ENCODE measurements at regions of chr2 and their contacts with region 1.

Region 1: GRCh38 chr2:32277674-32278482 is at the start of gene YIPF4:
- DNase-seq: peak; percentile 96
- ATAC-seq: peak; percentile 98
- H3K4me3 ChIP-seq: peak within 1 kb of the TSS; percentile 70 to 98 (median 94)
- H3K4me3 Mint-ChIP-seq: peak within 1 kb of the TSS; percentile 91
- H3K27ac ChIP-seq: peak within 1 kb of the TSS; percentile 66 to 95
- H3K27ac Mint-ChIP-seq: peak within 1 kb of the TSS; percentile 97
- H3K4me1 ChIP-seq: peaks cover 12 to 20% of the 10 kb centered on the region in 2 donors
- H3K4me1 Mint-ChIP-seq: peaks cover 23% of the 10 kb centered on the region
- H3K27me3 ChIP-seq: no peaks in the 10 kb centered on the region
- H3K27me3 Mint-ChIP-seq: peaks cover 12% of the 10 kb centered on the region
- CTCF ChIP-seq: no peak
- total RNA-seq, gene YIPF4: 38.0 and 42.4 TPM in 2 replicates

Region 2: DNA sequence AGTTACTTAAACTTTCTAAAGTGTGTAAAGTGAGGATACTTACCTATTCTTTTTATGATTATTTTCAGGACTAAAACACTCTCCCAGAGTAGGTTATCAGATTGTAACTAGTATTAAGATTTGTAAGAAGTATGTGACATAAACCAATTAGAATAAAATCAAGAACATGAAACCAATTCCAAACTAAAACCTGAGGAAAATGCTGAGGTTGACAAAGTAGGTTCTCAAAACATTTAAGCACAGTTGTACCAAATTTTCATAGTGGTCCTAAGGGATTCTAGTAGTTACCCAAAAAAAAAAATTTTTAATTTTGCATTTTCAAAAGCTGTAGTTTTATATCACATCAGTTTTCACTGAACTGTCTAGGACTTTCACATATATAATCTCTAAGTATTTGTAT is 424.4 kb before region 1 on chr2:
- CTCF ChIA-PET with region 1: no interaction called
- POLR2A ChIA-PET with region 1: no interaction called
- intact Hi-C with region 1: no loop called
- DNase-seq: no peak
- ATAC-seq: no peak
- H3K4me3 ChIP-seq: no peak overlapping the region
- H3K4me3 Mint-ChIP-seq: no peak overlapping the region
- H3K27ac ChIP-seq: no peak overlapping the region
- H3K27ac Mint-ChIP-seq: no peak overlapping the region
- H3K4me1 ChIP-seq: no peaks in the 10 kb centered on the region
- H3K4me1 Mint-ChIP-seq: no peaks in the 10 kb centered on the region
- H3K27me3 ChIP-seq: no peaks in the 10 kb centered on the region
- H3K27me3 Mint-ChIP-seq: no peaks in the 10 kb centered on the region
- CTCF ChIP-seq: no peak

Region 3: DNA sequence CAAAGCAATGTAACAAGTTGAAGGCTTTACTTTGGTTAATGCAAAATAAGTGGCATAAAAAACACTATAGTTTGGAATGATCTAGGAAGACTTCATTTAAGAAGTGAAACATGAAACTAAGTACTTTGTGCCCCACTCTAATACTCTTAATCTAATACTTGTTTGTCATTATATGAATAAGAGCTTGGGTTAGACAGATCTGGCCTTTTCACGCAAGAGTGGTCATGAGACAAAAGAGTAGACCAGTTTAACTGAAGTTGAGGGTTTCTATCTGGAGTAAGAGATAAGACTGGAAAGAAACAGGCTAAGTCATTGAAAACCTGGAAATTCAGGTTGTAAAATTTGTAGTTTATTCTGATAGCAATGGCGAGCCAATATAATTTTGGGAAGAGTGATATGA is 109.4 kb before region 1 on chr2:
- CTCF ChIA-PET with region 1: no interaction called
- POLR2A ChIA-PET with region 1: interaction called, 8 read pairs
- intact Hi-C with region 1: loop called (anchors 1 kb)
- DNase-seq: no peak
- ATAC-seq: no peak
- H3K4me3 ChIP-seq: no peak overlapping the region
- H3K4me3 Mint-ChIP-seq: no peak overlapping the region
- H3K27ac ChIP-seq: no peak overlapping the region
- H3K27ac Mint-ChIP-seq: no peak overlapping the region
- H3K4me1 ChIP-seq: peaks cover 12 to 18% of the 10 kb centered on the region in 2 donors
- H3K4me1 Mint-ChIP-seq: peaks cover 30% of the 10 kb centered on the region
- H3K27me3 ChIP-seq: no peaks in the 10 kb centered on the region
- H3K27me3 Mint-ChIP-seq: no peaks in the 10 kb centered on the region
- CTCF ChIP-seq: no peak